Posterior cingulate gyrus (tissue), 11 donors: ENCODE measurements at regions of chr17 and their contacts with region 1.

Region 1: DNA sequence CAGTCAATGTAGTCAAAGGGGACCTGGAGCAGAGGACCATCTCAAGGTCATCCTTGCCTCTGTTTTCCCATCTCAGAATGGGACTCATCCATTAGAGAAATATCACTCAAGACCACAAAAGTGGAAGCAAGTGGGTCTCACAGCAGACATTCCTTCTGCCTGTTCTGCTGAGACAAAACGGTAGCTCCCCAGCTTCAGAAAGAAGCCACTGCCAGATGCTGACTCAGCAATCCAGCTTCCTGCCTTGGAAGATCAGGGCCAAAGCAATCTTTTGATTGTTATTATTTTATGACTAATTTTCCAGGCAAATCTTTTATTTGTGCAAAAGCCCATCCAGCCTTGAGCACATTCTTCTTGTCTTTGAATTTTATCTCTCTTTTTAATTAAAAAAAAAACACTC is 86.8 kb downstream of the CCT6B start:
- DNase-seq: no peak

Region 2: GRCh38 chr17:34756637-34757021 is 117.8 kb before region 1 on chr17:
- intact Hi-C with region 1: loop called (anchors 10 kb)
- DNase-seq: peak in 3 of 10 donors; percentile 12 to 83 (median 52)